IMR-90 (cell line): ENCODE measurements at regions of chr9 and their contacts with region 1.

Region 1: DNA sequence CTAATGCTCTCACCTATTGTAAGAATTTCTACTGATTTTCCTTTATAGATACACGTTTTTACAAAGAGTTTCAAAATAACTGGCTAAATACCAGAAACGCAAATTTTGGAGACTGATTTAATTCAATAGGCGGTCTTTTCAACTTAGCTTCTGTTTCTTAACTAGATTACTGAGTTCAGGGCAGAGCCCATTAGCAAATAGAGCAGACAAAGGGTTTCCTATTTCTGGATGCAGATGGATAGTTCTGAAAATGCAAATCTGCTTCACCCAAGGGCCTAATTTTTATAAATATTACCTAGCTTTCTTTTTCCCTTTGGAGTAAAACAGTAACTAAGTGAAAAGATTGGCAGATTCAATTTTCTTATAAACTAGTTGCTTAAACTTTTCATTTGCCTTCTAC is 13.6 kb upstream of the KIAA1958 start:
- DNase-seq: no peak
- ATAC-seq: no peak
- H3K4me3 ChIP-seq: no peak overlapping the region
- H3K27ac ChIP-seq: no peak overlapping the region
- H3K4me1 ChIP-seq: no peaks in the 10 kb centered on the region
- H3K27me3 ChIP-seq: no peaks in the 10 kb centered on the region
- CTCF ChIP-seq: no peak
- POLR2A ChIP-seq: no peak
- RAD21 ChIP-seq: no peak

Region 2: DNA sequence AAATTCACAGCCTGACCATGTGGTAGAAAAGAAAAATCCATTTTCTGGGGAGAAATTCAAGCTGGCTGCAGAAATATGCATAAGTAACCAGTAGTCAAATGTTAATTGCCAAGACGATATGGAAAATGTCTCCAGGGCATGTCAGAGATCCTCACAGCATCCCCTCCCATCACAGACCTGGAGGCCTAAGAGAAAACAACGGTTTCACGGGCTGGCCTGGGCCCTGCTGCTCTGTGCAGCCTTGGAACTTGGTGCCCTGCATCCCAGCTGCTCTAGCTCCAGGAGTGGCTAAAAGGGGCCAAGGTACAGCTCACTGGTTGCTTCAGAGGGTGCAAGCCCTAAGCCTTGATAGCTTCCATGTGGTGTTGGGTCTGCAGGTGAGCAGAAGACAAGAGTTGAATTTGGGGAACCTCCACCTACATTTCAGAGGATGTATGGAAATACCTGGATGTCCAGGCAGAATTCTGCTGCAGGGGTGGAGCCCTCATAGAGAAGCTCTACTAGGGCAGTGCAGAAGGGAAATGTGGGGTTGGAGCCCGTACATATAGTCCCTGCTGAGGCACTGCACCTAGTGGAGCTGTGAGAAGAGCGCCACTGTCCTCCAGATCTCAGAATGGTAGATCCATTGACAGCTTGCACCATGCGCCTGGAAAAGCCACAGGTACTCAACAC is 189.3 kb before region 1 on chr9:
- CTCF ChIA-PET with region 1: no interaction called
- POLR2A ChIA-PET with region 1: no interaction called
- dilution Hi-C with region 1: no loop called
- in situ Hi-C with region 1: no loop called
- intact Hi-C with region 1: no loop called
- DNase-seq: no peak
- ATAC-seq: no peak
- H3K4me3 ChIP-seq: no peak overlapping the region
- H3K27ac ChIP-seq: no peak overlapping the region
- H3K4me1 ChIP-seq: peaks cover 2% of the 10 kb centered on the region
- H3K27me3 ChIP-seq: no peaks in the 10 kb centered on the region
- CTCF ChIP-seq: no peak
- POLR2A ChIP-seq: no peak
- RAD21 ChIP-seq: no peak

Region 3: DNA sequence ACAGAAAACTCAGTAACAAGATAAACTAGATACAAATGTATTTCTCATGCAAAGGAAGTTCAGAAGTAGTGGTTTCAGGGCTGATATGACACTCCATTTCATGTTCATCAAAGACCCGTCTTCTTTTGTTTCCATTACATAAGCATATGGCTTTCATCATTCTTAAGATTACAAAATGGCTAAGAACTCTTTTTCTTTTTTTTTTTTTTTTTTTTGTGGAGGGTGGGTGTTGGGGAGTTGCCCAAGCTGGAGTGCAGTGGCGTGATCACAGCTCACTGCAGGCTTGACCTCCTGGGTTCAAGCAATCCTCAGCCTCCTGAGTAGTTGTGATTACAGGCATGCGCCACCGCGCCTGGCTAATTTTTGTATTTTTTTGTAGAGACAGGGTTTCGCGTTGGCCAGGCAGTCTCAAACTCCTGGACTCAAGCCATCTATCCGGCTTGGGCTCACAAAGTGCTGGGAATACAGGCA is 117.5 kb before region 1 on chr9:
- CTCF ChIA-PET with region 1: no interaction called
- POLR2A ChIA-PET with region 1: no interaction called
- dilution Hi-C with region 1: no loop called
- in situ Hi-C with region 1: no loop called
- intact Hi-C with region 1: no loop called
- DNase-seq: no peak
- ATAC-seq: no peak
- H3K4me3 ChIP-seq: no peak overlapping the region
- H3K27ac ChIP-seq: no peak overlapping the region
- H3K4me1 ChIP-seq: no peaks in the 10 kb centered on the region; the same call in 1 of the 2 replicates
- H3K27me3 ChIP-seq: no peaks in the 10 kb centered on the region
- CTCF ChIP-seq: no peak
- POLR2A ChIP-seq: no peak
- RAD21 ChIP-seq: no peak

Region 4: GRCh38 chr9:112694706-112695555 is 221.9 kb after region 1 on chr9:
- CTCF ChIA-PET with region 1: no interaction called
- POLR2A ChIA-PET with region 1: no interaction called
- dilution Hi-C with region 1: no loop called
- in situ Hi-C with region 1: no loop called
- intact Hi-C with region 1: no loop called
- DNase-seq: no peak
- ATAC-seq: no peak; the same call in none of the 2 replicates
- H3K4me3 ChIP-seq: no peak overlapping the region
- H3K27ac ChIP-seq: no peak overlapping the region
- H3K4me1 ChIP-seq: no peaks in the 10 kb centered on the region
- H3K27me3 ChIP-seq: no peaks in the 10 kb centered on the region
- CTCF ChIP-seq: no peak
- POLR2A ChIP-seq: no peak
- RAD21 ChIP-seq: no peak

Region 5: GRCh38 chr9:112819635-112820496 is 346.9 kb after region 1 on chr9:
- CTCF ChIA-PET with region 1: no interaction called
- POLR2A ChIA-PET with region 1: no interaction called
- dilution Hi-C with region 1: no loop called
- in situ Hi-C with region 1: loop called (anchors 25 kb)
- intact Hi-C with region 1: no loop called
- DNase-seq: peak; percentile 85
- ATAC-seq: peak; percentile 96
- H3K4me3 ChIP-seq: no peak overlapping the region
- H3K27ac ChIP-seq: no peak overlapping the region
- H3K4me1 ChIP-seq: peaks cover 2% of the 10 kb centered on the region; the same call in 1 of the 2 replicates
- H3K27me3 ChIP-seq: no peaks in the 10 kb centered on the region
- CTCF ChIP-seq: peak; percentile 68
- POLR2A ChIP-seq: no peak
- RAD21 ChIP-seq: peak; percentile 82